ENCODE measurements at regions of chr14 and their contacts with region 1.

Region 1: DNA sequence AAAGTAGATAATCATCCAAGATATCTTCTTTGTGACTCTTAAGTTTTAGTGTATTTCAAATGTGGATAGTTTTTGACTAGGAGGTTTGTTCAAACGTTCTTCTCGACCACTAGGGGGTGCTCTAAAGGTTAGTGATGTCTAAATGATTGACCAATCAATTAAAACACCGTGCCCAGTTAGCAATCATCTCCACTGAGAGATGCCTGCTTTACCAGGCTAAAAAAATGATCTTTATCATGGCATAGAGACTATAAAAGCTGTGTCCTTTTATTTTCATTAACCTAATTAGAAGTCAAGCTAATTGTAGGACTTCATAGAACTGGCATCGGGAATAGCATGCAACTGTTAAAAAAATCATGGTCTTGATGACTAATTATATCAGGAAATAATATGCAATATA is 153.9 kb downstream of the PRKCH start:
- DNase-seq: no peak
- H3K4me3 ChIP-seq: no peak overlapping the region
- CTCF ChIP-seq: peak; percentile 35

Region 2: GRCh38 chr14:61444215-61444768 is 31.0 kb before region 1 on chr14:
- CTCF ChIA-PET with region 1: no interaction called
- POLR2A ChIA-PET with region 1: no interaction called
- DNase-seq: no peak
- H3K4me3 ChIP-seq: no peak overlapping the region
- CTCF ChIP-seq: no peak

Region 3: DNA sequence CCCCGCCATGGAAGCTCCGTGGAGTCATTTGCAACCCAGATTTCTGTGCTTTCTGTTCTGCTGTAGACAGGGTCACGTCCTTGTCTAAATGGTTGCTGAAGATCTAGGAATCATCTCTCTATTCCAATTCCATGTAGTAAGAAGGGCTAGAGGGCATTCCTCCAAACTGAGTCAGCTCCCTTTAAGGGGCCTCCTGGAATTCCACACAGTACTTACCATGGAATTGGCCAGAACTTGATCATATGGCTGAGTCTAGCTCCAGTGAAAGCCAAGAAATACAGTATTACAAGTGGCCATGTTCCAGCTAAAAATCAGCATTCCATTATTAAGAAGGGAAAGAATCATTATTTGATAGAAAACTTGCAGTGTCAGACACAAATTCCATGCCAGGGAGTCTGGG is 17.9 kb after region 1 on chr14:
- CTCF ChIA-PET with region 1: interaction called, 108 read pairs
- POLR2A ChIA-PET with region 1: no interaction called
- DNase-seq: peak; percentile 89
- H3K4me3 ChIP-seq: no peak overlapping the region; the same call in 1 of the 2 replicates
- CTCF ChIP-seq: no peak

Region 4: DNA sequence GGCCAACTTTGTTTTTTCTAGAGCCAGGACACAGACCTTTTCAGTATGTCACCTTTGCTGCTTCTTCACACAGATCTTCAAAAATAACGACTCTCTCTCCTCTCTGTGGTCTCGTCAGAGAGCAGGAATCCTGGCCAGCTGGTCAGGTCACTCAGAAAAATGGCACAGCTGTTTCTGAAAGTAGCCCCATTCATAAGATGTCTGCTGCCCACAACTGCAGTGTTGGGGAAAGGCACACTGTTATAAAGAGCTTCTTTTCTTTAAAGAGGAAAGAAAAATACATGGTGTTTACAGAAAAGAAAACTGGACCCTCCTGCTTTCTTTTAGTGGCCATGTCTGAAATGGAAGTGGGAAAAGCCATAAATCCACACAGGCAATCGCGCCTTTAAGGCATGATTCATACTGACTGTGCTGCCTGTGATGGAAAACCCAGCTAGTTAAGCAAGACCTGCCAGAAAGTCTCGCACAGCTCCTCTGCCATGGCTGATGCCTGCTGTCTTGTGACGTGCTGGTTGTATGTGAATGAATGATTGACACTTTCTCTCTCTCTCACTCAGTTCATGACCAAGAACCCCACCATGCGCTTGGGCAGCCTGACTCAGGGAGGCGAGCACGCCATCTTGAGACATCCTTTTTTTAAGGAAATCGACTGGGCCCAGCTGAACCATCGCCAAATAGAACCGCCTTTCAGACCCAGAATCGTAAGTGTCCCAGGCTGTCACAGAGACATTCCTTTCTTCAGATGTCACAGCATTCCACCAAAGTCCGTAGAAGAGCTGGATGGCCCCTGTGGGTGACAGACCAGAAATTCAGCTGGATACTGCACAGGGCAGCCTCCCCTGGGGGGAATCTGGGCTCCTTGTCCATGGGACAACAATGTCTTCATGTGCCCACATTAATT is 72.1 kb after region 1 on chr14:
- CTCF ChIA-PET with region 1: interaction called, 18 read pairs
- POLR2A ChIA-PET with region 1: interaction called, 3 read pairs
- DNase-seq: peak; percentile 83
- H3K4me3 ChIP-seq: no peak overlapping the region
- CTCF ChIP-seq: no peak

Region 5: DNA sequence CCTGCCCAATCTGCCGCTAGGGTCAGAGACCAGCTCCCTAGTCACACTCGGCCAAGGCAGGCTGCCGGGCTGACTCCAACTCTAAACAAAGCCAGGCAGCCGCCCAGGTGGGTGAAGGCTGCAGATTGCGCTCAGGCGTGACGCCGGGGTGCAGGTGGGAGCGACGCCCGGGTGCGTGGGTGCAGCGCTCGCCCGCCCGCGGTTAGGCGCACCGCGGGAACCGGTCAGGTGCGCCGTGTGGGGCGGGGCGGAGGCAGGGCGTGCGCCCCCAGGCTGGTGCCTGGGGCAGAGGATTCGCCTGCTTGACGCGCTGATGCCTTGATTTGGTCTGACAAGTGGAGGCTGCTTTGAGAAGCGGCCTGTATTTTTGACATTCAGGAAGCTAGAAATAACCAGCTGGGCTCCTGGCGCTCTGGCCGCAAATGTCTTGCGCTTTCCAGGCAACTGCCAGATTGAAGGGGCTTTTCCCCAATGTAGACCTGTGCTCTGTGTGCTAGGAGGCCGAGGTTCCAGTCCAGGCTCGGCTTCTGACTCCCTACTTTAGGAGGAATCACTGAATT is 93.3 kb after region 1 on chr14:
- CTCF ChIA-PET with region 1: interaction called, 37 read pairs
- POLR2A ChIA-PET with region 1: interaction called, 4 read pairs
- DNase-seq: no peak
- H3K4me3 ChIP-seq: no peak overlapping the region
- CTCF ChIP-seq: no peak

Region 6: GRCh38 chr14:61719344-61720293 is 244.3 kb after region 1 on chr14:
- CTCF ChIA-PET with region 1: interaction called, 12 read pairs
- POLR2A ChIA-PET with region 1: no interaction called
- DNase-seq: no peak
- H3K4me3 ChIP-seq: no peak overlapping the region
- CTCF ChIP-seq: no peak